ENCODE measurements at regions of chr12 and their contacts with region 1.

Region 1: DNA sequence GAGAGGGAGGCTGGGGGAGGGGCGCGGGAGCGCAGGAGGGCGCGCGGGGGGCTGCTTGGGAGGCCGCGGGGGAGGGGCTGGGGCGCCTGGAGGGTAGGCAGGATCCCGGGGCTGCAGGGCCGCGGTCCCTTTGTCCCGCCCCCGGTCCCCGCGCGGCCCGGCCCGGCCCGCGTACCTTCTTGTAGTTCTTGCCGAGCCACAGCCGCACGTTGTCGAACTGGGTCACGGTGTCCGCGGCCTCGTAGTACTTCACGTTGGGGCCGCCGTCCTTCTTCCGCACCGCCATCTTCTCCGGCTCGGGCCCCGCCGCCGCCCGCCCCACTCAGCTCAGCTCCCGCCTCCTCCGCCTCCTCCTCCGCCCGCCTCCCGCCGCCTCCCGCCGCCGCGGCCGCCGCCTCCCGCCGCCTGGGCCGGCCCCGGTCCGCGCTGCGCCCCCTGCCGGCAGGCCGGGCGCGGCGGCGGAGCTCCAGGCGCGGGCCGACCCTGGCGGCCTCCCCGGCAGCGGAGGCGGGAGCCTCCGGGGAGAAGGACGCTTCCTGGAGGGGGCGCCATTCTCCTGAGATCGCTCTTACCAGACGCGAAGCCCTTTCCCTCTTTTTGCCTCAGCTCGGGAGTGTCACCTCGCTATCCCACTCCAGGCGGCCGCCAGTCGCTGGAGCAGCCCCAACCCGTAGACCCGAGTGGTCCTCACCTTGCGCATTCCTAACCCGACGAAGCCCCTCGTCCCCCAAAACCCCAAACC is at the start of gene SMARCC2:
- DNase-seq: peak; percentile 85
- H3K4me3 Mint-ChIP-seq: peak within 1 kb of the TSS; percentile 95
- H3K27ac Mint-ChIP-seq: peak within 1 kb of the TSS; percentile 96
- H3K4me1 Mint-ChIP-seq: peaks cover 55% of the 10 kb centered on the region
- H3K27me3 Mint-ChIP-seq: peaks cover 2% of the 10 kb centered on the region
- total RNA-seq, gene SMARCC2: 124 and 132 TPM in 2 replicates

Region 2: GRCh38 chr12:56127888-56128669 is 61.3 kb before region 1 on chr12 and contains the start of gene ESYT1:
- intact Hi-C with region 1: loop called (anchors 1 kb)
- DNase-seq: peak; percentile 98
- H3K4me3 Mint-ChIP-seq: peak within 1 kb of the TSS; percentile 97
- H3K27ac Mint-ChIP-seq: peak within 1 kb of the TSS; percentile 94
- H3K4me1 Mint-ChIP-seq: peaks cover 62% of the 10 kb centered on the region
- H3K27me3 Mint-ChIP-seq: no peaks in the 10 kb centered on the region
- total RNA-seq, gene ESYT1: 159 and 161 TPM in 2 replicates

Region 3: GRCh38 chr12:56152318-56153033 is 36.9 kb before region 1 on chr12 and contains the start of gene MYL6B:
- intact Hi-C with region 1: loop called (anchors 1 kb)
- DNase-seq: peak; percentile 92
- H3K4me3 Mint-ChIP-seq: peak within 1 kb of the TSS; percentile 88
- H3K27ac Mint-ChIP-seq: peak within 1 kb of the TSS; percentile 99
- H3K4me1 Mint-ChIP-seq: peaks cover 39% of the 10 kb centered on the region
- H3K27me3 Mint-ChIP-seq: no peaks in the 10 kb centered on the region
- total RNA-seq, gene MYL6B: 58.8 and 67.6 TPM in 2 replicates

Region 4: GRCh38 chr12:56158029-56158925 is 31.1 kb before region 1 on chr12 and contains the start of gene MYL6:
- intact Hi-C with region 1: loop called (anchors 1 kb)
- DNase-seq: peak; percentile 90
- H3K4me3 Mint-ChIP-seq: peak within 1 kb of the TSS; percentile 97
- H3K27ac Mint-ChIP-seq: peak within 1 kb of the TSS; percentile 93
- H3K4me1 Mint-ChIP-seq: peaks cover 49% of the 10 kb centered on the region
- H3K27me3 Mint-ChIP-seq: no peaks in the 10 kb centered on the region
- total RNA-seq, gene MYL6: 786 and 802 TPM in 2 replicates

Region 5: DNA sequence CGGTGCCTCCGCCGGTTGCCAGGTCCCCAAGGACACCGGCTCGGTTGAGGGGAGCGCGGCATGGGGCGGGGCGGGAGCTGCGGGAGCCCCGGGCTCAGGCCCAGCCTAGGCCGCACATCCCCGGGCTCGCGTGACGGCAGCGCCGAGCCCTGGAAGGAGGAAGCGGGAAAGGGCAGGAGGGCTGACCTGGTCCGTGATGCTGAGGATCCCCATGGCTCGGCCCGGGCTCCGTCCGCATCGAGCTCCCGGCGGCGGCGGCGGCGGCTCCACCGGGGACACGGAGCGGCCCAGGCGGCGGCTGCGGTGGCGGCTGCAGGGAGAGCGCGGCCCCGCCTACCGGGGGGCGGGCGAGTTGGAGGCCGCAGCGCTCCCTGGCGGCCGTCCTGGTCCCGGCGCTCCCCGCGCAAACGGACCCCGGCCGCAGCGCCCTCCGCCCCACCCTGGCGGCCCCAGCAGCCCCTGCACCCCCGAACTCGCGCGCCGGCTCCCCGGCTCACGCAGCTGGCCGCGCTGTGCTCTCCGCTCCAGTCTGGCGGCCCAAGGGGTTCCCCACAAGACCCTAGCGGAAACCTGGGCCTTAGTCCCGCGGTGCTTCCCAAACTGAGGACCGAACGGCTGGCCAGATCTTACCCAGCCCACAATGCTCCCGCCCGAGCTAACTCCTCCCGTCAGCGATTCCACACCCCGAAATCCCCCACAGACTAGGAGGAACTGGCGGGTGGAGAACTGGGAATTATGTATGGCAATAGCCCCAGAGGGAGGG is 68.9 kb after region 1 on chr12 and contains the start of gene ANKRD52:
- intact Hi-C with region 1: loop called (anchors 1 kb)
- DNase-seq: peak; percentile 82
- H3K4me3 Mint-ChIP-seq: peak within 1 kb of the TSS; percentile 90
- H3K27ac Mint-ChIP-seq: peak within 1 kb of the TSS; percentile 83
- H3K4me1 Mint-ChIP-seq: peaks cover 22% of the 10 kb centered on the region
- H3K27me3 Mint-ChIP-seq: no peaks in the 10 kb centered on the region
- total RNA-seq, gene ANKRD52: 71.0 and 83.9 TPM in 2 replicates

Region 6: DNA sequence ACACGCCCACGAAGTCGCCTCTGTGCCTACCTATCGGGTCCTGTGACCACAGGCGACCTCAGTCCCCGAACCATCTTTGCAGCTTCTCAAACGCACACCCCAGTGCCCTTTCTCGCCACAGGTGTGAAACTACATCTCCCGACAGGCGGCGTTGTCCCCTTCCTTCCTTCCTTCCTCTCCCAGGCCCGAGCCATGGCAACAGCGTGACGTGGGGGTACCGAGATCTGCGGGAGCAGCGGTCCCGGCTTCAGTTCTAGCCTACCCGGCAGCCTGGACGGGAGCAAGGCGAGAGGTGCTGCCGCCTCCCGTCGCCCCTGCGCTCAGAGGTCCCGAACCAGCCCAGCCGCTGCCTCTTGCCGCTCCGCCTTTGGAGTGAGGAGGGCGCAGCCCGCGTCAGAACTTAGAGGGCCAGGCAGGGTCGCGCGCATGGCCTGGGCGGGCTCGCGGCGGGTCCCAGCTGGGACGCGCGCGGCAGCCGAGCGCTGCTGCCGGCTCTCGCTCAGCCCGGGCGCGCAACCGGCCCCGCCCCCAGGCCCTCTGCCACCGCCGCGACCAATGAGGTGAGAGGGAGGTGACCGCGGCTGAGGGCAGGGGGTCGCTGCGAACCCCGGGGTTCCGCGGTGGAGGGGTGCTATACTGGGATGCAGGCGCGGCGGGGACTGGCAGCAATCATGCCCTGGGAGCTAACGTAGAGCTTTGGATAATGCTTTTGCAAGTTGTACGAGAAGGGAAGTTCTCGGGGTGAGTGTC is 77.5 kb after region 1 on chr12 and contains the start of gene COQ10A:
- intact Hi-C with region 1: loop called (anchors 2 kb)
- DNase-seq: peak; percentile 84
- H3K4me3 Mint-ChIP-seq: peak within 1 kb of the TSS; percentile 96
- H3K27ac Mint-ChIP-seq: peak within 1 kb of the TSS; percentile 87
- H3K4me1 Mint-ChIP-seq: peaks cover 15% of the 10 kb centered on the region
- H3K27me3 Mint-ChIP-seq: no peaks in the 10 kb centered on the region
- total RNA-seq, gene COQ10A: 17.8 and 18.0 TPM in 2 replicates